IMR-90 (cell line): ENCODE measurements at regions of chr1 and their contacts with region 1.

Region 1: DNA sequence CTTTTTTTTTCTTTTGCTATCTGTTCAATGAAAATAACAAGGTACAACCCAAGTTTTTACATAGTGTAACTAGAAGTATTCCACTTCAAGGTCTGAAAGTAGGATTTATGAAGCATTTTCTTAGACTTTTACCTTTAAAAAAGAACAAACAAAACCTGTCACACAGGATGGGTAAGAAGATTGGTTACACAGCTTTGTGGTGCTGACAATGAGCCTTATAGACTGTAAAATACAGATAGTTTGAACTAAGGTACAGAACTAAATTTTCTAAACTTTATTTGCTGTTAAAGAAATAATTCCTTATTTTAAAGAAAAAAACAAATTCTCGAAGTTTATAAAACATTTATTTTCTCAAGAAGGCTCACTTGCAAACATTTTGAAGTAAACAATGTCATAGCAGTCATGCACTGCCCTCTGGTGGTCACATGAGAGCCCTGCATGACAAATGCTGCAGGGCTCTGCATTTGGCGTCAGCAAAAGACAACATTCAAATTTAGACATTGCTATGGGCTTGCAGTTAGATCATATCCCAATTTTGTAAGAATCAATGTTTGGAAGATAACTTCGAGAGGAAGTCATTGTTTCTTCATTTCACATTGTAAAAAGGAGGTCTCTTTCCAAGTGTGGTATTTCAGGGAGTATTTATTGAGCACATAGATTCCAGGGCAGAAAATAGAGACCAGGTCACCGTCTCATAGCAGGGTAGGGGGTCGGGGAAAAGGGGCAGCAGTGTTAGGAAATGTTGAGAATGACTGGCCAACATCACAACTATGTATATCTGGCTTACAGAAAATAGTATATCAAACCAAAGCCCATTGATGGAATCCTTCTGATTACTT is 115.3 kb upstream of the FMN2 start:
- DNase-seq: peak; percentile 59
- ATAC-seq: peak; percentile 88
- H3K4me3 ChIP-seq: no peak overlapping the region
- H3K27ac ChIP-seq: no peak overlapping the region
- H3K4me1 ChIP-seq: no peaks in the 10 kb centered on the region
- H3K27me3 ChIP-seq: peaks cover 3% of the 10 kb centered on the region
- CTCF ChIP-seq: peak; percentile 90
- POLR2A ChIP-seq: no peak
- RAD21 ChIP-seq: peak; percentile 78

Region 2: GRCh38 chr1:239413916-239414315 is 562.4 kb before region 1 on chr1:
- CTCF ChIA-PET with region 1: no interaction called
- POLR2A ChIA-PET with region 1: no interaction called
- dilution Hi-C with region 1: no loop called
- in situ Hi-C with region 1: no loop called
- intact Hi-C with region 1: loop called (anchors 5 kb)
- DNase-seq: no peak
- ATAC-seq: no peak
- H3K4me3 ChIP-seq: no peak overlapping the region
- H3K27ac ChIP-seq: no peak overlapping the region
- H3K4me1 ChIP-seq: no peaks in the 10 kb centered on the region
- H3K27me3 ChIP-seq: no peaks in the 10 kb centered on the region
- CTCF ChIP-seq: no peak
- POLR2A ChIP-seq: no peak
- RAD21 ChIP-seq: no peak